Testis (tissue), 5 donors: ENCODE measurements at regions of chr7 and their contacts with region 1.

Region 1: GRCh38 chr7:32218154-32218467 is 147.9 kb upstream of the PDE1C start:
- DNase-seq: no peak
- H3K4me3 ChIP-seq: no peak overlapping the region
- H3K27ac ChIP-seq: no peak overlapping the region
- H3K4me1 ChIP-seq: no peaks in the 10 kb centered on the region
- H3K27me3 ChIP-seq: no peaks in the 10 kb centered on the region
- CTCF ChIP-seq: no peak
- POLR2A ChIP-seq: no peak

Region 2: DNA sequence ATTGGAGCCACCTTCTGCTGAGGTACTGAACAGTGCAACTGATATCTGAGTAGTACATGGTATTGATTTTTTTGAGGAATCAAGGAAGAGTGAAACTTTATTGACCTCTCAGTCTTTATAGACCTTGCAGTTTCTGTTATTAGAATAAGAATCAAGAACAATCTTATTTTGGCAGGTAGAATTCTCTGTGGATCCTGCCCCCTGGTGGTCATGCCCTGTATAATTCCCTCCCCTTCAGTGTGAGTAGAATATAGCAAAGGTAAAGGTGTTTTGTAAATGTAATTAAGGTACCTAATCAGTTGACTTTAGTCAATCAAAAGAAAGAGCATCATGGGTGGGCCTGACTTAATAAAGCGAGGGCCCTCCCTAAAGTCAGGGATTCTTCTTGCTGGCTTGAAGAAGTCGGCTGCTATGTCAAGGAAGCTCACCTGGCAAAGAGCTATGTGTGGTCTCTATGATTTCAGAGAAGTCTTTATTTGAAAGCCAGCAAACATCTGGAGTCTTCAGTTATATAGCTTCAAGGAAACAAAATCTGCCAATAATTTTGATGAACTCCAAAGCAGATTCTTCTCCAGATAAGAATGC is 129.2 kb after region 1 on chr7:
- intact Hi-C with region 1: loop called (anchors 10 kb)
- DNase-seq: peak; percentile 60
- H3K4me3 ChIP-seq: no peak overlapping the region
- H3K27ac ChIP-seq: no peak overlapping the region
- H3K4me1 ChIP-seq: no peaks in the 10 kb centered on the region
- H3K27me3 ChIP-seq: no peaks in the 10 kb centered on the region
- CTCF ChIP-seq: peak; percentile 53 to 80 (median 56)
- POLR2A ChIP-seq: no peak